ENCODE measurements at regions of chr17 and their contacts with region 1.

Region 1: GRCh38 chr17:8091033-8091687 is 3.6 kb upstream of the ALOX12B start:
- DNase-seq: no peak
- ATAC-seq: no peak
- H3K4me3 Mint-ChIP-seq: no peak overlapping the region
- H3K27ac Mint-ChIP-seq: no peak overlapping the region
- H3K4me1 Mint-ChIP-seq: peaks cover 5% of the 10 kb centered on the region
- H3K27me3 Mint-ChIP-seq: peaks cover 27% of the 10 kb centered on the region
- CTCF ChIP-seq: no peak

Region 2: DNA sequence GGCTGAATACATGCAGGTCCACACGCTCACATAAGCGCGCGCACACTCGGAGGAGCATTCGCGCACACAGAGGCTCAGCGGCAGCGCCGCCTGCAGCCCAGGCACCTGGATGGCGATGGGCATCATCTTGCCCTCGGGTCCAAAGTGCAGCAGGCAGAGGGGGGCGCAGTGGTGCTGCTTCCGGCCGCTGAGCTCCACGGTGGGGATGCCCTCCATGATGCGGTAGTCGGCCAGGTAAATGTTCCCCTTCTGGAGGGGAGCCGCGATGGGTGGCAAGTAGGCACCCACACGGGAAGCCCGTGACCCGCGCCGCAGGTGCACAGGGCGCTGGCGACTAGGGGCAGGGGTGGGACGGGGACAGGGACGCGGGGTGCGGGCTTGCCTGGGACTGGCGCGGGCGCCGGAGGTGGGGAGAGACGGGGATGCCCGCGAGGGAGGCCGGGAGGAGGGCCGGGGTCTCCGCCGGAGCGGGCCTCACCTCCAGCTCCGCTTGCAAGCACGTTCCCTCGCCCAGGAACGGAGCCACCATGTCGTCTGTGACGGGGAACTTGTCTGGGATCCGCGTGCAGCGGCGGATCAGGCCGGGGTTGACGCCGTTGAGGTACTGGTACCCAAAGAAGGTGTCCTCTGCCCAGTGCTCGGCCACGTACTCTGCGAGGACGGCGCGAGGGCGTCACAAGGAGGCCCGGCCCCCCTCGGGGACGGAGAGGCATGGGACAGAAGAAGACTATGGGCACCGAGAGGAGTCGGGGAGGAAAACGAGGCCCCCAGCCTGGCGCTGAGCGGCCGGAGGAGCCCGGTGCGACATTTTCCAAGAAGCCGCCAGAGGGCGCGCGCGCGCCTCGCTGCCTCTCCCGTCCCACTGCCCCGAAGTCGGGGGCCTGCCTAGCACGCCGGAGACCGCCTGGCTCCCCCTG is 11.6 kb before region 1 on chr17:
- CTCF ChIA-PET with region 1: interaction called, 179 read pairs
- POLR2A ChIA-PET with region 1: interaction called, 4 read pairs
- intact Hi-C with region 1: no loop called
- DNase-seq: peak; percentile 93
- ATAC-seq: peak; percentile 94
- H3K4me3 Mint-ChIP-seq: peak overlapping the region; percentile 96
- H3K27ac Mint-ChIP-seq: peak overlapping the region; percentile 93
- H3K4me1 Mint-ChIP-seq: peaks cover 11% of the 10 kb centered on the region
- H3K27me3 Mint-ChIP-seq: peaks cover 5% of the 10 kb centered on the region
- CTCF ChIP-seq: peak; percentile 87

Region 3: GRCh38 chr17:8103549-8103948 is 12.4 kb after region 1 on chr17:
- CTCF ChIA-PET with region 1: interaction called, 162 read pairs
- POLR2A ChIA-PET with region 1: no interaction called
- intact Hi-C with region 1: no loop called
- DNase-seq: no peak
- ATAC-seq: no peak
- H3K4me3 Mint-ChIP-seq: no peak overlapping the region
- H3K27ac Mint-ChIP-seq: no peak overlapping the region
- H3K4me1 Mint-ChIP-seq: no peaks in the 10 kb centered on the region
- H3K27me3 Mint-ChIP-seq: no peaks in the 10 kb centered on the region
- CTCF ChIP-seq: no peak

Region 4: GRCh38 chr17:8109661-8110464 is 18.7 kb after region 1 on chr17:
- CTCF ChIA-PET with region 1: interaction called, 162 read pairs
- POLR2A ChIA-PET with region 1: interaction called, 6 read pairs
- intact Hi-C with region 1: no loop called
- DNase-seq: peak; percentile 87
- ATAC-seq: peak; percentile 98
- H3K4me3 Mint-ChIP-seq: peak overlapping the region; percentile 19
- H3K27ac Mint-ChIP-seq: no peak overlapping the region
- H3K4me1 Mint-ChIP-seq: no peaks in the 10 kb centered on the region
- H3K27me3 Mint-ChIP-seq: peaks cover 15% of the 10 kb centered on the region
- CTCF ChIP-seq: peak; percentile 98

Region 5: DNA sequence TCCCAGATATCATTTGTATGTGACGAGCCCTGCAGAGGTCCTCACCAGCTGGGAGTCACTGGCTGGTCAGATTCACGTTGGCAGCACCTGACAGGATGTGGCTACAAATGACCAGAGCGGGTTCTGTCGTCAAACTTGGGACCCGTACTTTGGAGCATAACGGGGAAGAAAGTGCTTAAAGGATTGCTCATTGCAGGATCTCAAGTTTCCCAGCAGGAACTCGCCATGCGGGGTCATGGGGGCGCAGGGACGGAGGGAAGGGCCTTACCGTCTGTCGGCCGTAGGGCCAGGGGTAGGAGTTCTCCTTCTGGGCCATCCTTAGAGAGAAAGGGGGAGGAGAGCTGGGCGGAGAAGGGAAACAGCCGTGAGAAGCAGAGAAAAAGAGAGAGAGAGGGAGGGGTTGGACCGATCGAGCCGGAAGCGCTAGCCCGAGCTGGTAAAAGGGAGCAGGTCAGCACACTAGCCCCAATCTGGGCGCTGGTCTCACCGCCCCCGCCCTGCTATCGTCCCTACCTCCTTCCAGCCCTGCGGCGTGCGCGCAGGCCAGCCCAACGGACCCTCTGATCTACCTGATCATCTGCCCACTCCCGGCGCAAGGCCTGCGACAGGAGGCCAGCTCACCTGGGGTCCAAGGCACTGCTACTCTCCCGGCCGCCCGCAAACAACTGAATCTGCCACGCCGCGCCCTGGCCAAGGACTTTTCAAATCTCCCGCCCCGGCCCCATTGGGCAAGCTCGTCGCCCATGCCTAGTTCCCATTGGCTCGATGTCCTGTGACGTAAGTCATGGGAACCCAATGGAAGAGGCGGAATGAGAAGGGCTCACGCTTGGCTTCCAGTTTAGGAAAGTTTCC is 119.0 kb after region 1 on chr17 and contains the start of gene AURKB:
- CTCF ChIA-PET with region 1: no interaction called
- POLR2A ChIA-PET with region 1: no interaction called
- intact Hi-C with region 1: no loop called
- DNase-seq: peak; percentile 97
- ATAC-seq: peak; percentile 96
- H3K4me3 Mint-ChIP-seq: peak within 1 kb of the TSS; percentile 91
- H3K27ac Mint-ChIP-seq: peak within 1 kb of the TSS; percentile 96
- H3K4me1 Mint-ChIP-seq: peaks cover 12% of the 10 kb centered on the region
- H3K27me3 Mint-ChIP-seq: no peaks in the 10 kb centered on the region
- CTCF ChIP-seq: no peak
- total RNA-seq, gene AURKB: 170 to 174 TPM

Region 6: GRCh38 chr17:8300627-8301242 is 209.6 kb after region 1 on chr17:
- CTCF ChIA-PET with region 1: interaction called, 11 read pairs
- POLR2A ChIA-PET with region 1: no interaction called
- intact Hi-C with region 1: no loop called
- DNase-seq: peak; percentile 70
- ATAC-seq: peak; percentile 95
- H3K4me3 Mint-ChIP-seq: no peak overlapping the region
- H3K27ac Mint-ChIP-seq: peak overlapping the region; percentile 41
- H3K4me1 Mint-ChIP-seq: peaks cover 6% of the 10 kb centered on the region
- H3K27me3 Mint-ChIP-seq: no peaks in the 10 kb centered on the region
- CTCF ChIP-seq: peak; percentile 84

Region 7: DNA sequence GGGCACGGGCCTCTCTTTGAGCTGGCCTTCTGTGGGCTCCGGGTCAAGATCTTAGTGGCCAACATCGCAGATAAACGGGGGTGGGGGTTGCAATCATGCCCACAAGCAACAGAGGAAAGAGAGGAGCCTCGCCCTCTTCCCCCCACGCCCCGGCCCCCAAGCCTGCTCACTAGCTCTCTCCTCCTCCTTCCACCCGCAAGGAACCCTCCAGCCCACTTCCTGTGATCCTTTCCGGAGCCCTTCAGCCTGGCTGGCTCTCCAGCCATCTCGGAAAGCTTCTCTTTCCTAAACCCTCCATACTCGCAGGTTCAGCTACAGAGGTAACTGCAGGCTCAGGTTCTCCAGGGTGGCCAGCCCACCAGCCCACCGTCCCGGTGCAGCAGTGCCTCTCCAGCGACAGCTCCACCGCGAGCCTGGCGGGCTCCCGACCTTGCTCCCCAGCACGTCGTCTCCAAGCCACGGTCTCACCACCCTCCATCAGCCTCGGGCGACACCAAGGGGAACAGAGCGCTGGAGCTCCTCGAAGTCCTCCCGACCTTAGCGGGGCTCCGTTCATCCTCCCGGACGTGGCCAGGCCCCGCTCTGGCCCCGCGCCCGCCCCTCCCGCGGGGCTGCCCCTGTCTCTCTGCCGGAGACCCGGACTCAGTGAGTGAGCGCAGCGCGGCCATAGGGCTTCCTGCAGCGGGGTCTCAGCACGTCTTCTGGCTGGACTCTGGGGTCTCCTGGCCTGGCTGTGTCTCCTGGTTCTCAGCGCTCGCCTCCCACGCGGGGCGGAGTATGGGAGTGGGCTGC is 235.5 kb after region 1 on chr17:
- CTCF ChIA-PET with region 1: interaction called, 10 read pairs
- POLR2A ChIA-PET with region 1: no interaction called
- intact Hi-C with region 1: no loop called
- DNase-seq: peak; percentile 48
- ATAC-seq: peak; percentile 75
- H3K4me3 Mint-ChIP-seq: peak overlapping the region; percentile 64
- H3K27ac Mint-ChIP-seq: no peak overlapping the region
- H3K4me1 Mint-ChIP-seq: peaks cover 12% of the 10 kb centered on the region
- H3K27me3 Mint-ChIP-seq: peaks cover 35% of the 10 kb centered on the region
- CTCF ChIP-seq: no peak